ENCODE measurements at regions of chr10 and their contacts with region 1.

Region 1: DNA sequence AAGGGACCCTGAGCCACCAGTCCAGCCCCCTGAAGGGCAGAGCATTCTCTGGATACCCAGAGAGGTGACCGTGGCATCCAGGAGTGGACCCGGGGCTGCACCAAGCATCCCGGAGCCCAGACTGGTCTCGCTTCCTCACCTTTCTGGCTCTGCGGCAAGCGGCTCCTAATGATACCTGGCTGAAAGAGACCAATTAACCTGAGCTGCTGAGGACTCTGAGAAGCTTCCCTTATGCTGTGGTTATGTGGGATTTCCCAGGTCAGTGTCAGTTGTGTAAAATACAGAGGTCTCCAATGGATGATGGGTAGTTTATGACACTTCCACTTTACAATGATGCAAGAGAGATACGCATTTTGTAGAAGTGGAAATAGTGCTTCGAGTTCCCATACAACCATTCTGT is 51.5 kb downstream of the PFKFB3 start:
- DNase-seq: no peak
- H3K4me3 ChIP-seq: no peak overlapping the region
- H3K27ac ChIP-seq: no peak overlapping the region
- H3K27me3 ChIP-seq: no peaks in the 10 kb centered on the region
- CTCF ChIP-seq: no peak

Region 2: DNA sequence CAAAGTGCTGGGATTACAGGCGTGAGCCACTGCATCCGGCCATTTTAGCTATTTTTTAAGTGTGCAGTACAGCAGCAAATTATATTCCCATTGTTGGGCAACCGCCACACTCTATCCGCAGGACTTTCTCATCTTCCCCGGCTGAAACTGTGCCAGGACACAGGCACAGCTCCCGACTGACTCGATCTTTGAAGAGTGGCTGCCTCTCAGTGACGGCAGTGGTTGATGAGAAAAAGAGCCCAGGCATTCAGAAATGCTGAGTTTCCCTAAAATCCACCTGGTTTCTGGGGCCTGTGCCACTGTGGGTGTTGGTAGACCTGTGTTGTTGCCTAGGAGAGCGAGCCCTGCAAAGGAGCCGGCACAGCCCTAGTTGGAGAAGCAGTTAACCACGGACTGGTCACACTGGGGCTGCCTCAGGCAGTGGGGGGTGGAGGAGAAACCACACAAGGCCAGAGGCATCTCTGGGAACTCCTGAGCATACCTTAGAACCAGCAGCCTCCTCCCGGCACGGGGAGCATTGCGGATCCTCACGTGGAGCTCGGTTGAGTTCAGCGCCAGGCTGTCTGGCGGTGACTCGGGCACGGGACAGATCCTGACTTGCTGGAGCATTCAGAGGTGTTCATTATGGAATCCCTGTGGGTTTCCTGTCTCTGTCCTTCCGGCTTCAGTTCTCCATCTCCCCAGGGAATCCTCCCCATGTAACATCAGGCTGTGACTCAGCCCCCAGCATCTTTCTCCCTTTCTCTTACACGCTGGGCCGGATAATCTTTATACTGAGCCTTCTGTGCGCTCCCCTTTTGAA is 35.3 kb before region 1 on chr10:
- intact Hi-C with region 1: loop called in 1 of 2 experiments (anchors 5 kb)
- DNase-seq: no peak
- H3K4me3 ChIP-seq: no peak overlapping the region
- H3K27ac ChIP-seq: peak overlapping the region in 32 of 59 donors; percentile 7 to 67 (median 39)
- H3K27me3 ChIP-seq: no peaks in the 10 kb centered on the region
- CTCF ChIP-seq: no peak

Region 3: GRCh38 chr10:6267941-6268340 is 13.7 kb after region 1 on chr10:
- intact Hi-C with region 1: loop called in 1 of 2 experiments (anchors 2 kb)
- DNase-seq: no peak
- H3K4me3 ChIP-seq: no peak overlapping the region
- H3K27ac ChIP-seq: peak overlapping the region in 21 of 59 donors; percentile 7 to 93 (median 47)
- H3K27me3 ChIP-seq: no peaks in the 10 kb centered on the region
- CTCF ChIP-seq: no peak

Region 4: GRCh38 chr10:6802762-6803426 is 548.7 kb after region 1 on chr10:
- intact Hi-C with region 1: no loop called
- DNase-seq: no peak
- H3K4me3 ChIP-seq: no peak overlapping the region
- H3K27ac ChIP-seq: no peak overlapping the region
- H3K27me3 ChIP-seq: no peaks in the 10 kb centered on the region
- CTCF ChIP-seq: no peak